ENCODE measurements at regions of chr12 and their contacts with region 1.

Region 1: GRCh38 chr12:3658327-3659163 is 94.4 kb downstream of the CRACR2A start:
- DNase-seq: peak in 10 of 14 experiments; percentile 5 to 57 (median 20)
- ATAC-seq: no peak
- H3K4me3 ChIP-seq: no peak overlapping the region
- H3K4me3 Mint-ChIP-seq: no peak overlapping the region
- H3K27ac ChIP-seq: no peak overlapping the region
- H3K27ac Mint-ChIP-seq: no peak overlapping the region
- H3K4me1 ChIP-seq: no peaks in the 10 kb centered on the region
- H3K4me1 Mint-ChIP-seq: no peaks in the 10 kb centered on the region
- H3K27me3 ChIP-seq: no peaks in the 10 kb centered on the region
- H3K27me3 Mint-ChIP-seq: no peaks in the 10 kb centered on the region
- CTCF ChIP-seq: peak; percentile 53

Region 2: DNA sequence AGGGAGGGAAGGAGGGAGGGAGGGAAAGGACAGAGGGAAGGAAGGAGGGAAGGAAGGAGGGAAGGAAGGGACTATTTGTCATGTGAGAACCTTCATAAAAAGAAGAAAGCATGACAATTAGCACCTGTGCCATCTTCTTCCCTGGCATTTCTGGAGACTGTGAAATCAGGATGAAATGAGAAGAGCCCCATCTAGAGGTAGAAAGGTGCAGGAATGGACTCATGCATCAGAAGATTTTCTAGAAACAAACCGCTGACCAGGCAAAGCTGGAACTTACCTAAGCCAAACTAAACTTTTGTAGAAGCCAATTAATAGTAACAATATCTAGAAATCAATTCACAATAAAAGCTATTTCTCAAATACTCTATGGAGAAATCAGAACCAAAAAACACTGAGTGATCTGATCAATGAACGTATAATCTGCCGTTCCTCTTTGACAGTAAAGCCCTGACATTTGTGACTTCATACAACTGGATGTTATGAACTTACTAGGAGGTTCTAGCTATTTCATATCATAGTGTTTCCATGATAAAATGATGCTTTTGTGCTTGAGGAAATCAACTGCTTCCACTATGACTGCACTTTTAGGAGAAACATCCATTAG is 118.8 kb after region 1 on chr12:
- CTCF ChIA-PET with region 1: no interaction called
- POLR2A ChIA-PET with region 1: no interaction called
- intact Hi-C with region 1: loop called (anchors 1 kb)
- DNase-seq: peak in 4 of 14 experiments; percentile 12 to 67 (median 58)
- ATAC-seq: peak; percentile 63
- H3K4me3 ChIP-seq: no peak overlapping the region
- H3K4me3 Mint-ChIP-seq: no peak overlapping the region
- H3K27ac ChIP-seq: no peak overlapping the region
- H3K27ac Mint-ChIP-seq: no peak overlapping the region
- H3K4me1 ChIP-seq: peaks cover 2% of the 10 kb centered on the region
- H3K4me1 Mint-ChIP-seq: peaks cover 5% of the 10 kb centered on the region
- H3K27me3 ChIP-seq: no peaks in the 10 kb centered on the region
- H3K27me3 Mint-ChIP-seq: no peaks in the 10 kb centered on the region
- CTCF ChIP-seq: peak; percentile 75

Region 3: DNA sequence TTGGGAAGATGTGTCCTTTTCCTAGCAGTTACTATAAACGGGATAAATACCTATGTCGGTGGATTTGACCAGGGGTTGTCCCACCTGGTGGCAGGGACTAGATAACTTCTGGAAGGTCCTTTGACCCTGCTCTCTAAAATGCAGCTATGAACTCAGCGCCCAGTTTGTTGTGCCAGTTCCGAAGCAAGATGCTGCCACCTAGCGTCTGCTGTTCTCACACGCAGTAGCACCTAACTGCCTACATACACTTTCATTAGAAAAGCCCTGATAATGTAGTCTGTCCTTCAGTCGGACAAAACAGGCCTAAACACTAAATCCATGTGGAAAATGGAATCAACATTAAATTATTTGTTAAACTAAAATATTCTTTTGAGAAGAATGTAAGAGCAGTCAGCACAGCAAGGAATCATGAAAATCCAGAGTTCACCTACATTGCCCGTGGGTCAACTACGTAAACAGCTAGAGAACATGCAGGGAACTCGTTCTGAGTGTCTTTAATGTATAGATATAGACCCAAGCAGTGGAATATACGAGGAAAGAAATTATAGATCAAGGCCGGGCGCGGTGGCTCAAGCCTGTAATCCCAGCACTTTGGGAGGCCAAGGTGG is 145.4 kb after region 1 on chr12:
- CTCF ChIA-PET with region 1: interaction called, 3 read pairs
- POLR2A ChIA-PET with region 1: no interaction called
- intact Hi-C with region 1: loop called (anchors 1 to 2 kb)
- DNase-seq: peak; percentile 54 to 84 (median 64)
- ATAC-seq: peak; percentile 71
- H3K4me3 ChIP-seq: no peak overlapping the region
- H3K4me3 Mint-ChIP-seq: no peak overlapping the region
- H3K27ac ChIP-seq: no peak overlapping the region
- H3K27ac Mint-ChIP-seq: peak overlapping the region; percentile 67
- H3K4me1 ChIP-seq: no peaks in the 10 kb centered on the region
- H3K4me1 Mint-ChIP-seq: no peaks in the 10 kb centered on the region
- H3K27me3 ChIP-seq: no peaks in the 10 kb centered on the region
- H3K27me3 Mint-ChIP-seq: no peaks in the 10 kb centered on the region
- CTCF ChIP-seq: peak; percentile 92

Measured in CD4-positive, alpha-beta T cell (primary cell).